Activated naive CD8-positive, alpha-beta T cell treated with anti-CD3 and anti-CD28 coated beads, Interleukin-2, amount 10 ng/mL, durations not matched to agents 7 days and 5 days (primary cell): ENCODE measurements at regions of chr1 and their contacts with region 1.

Region 1: DNA sequence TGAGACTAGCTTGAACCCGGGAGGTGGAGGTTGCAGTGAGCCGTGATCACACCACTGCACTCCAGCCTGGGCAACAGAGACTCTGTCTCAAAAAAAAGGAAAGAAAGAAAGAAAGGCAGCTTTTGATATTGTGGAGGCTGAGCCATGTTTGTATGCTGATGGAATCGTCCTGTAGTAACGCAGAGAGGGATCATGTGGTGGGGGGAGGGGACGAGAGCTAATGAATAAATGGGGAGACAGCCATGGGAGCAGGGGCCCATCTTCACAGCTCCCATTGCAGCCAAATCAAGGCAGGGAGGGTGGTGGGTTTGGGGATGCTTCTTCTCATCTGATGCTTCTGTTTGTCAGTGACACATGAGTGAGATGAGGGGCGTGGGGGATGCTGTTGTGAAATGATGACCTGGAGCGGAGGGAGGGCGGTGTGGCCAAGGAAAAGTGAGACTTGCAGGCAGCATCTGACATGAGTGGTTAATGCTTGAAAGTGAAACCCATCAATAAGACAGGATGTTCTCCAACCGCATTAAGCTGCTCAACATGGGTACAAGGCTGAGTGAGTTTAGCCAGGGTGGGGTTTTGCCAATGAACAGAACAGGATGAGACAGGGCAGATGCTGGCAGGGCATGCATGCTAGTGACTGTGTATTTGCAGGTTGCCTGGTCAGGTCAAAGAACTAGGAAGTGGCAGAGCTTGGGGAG is 16.7 kb downstream of the SPATA21 start:
- DNase-seq: peak; percentile 69
- ATAC-seq: peak; percentile 97
- H3K4me3 Mint-ChIP-seq: peak overlapping the region; percentile 68
- H3K27ac Mint-ChIP-seq: peak overlapping the region; percentile 94
- H3K4me1 Mint-ChIP-seq: peaks cover 28% of the 10 kb centered on the region
- H3K27me3 Mint-ChIP-seq: peaks cover 4% of the 10 kb centered on the region

Region 2: GRCh38 chr1:16324456-16324890 is 96.1 kb before region 1 on chr1:
- POLR2A ChIA-PET with region 1: no interaction called
- DNase-seq: no peak
- ATAC-seq: no peak
- H3K4me3 Mint-ChIP-seq: no peak overlapping the region
- H3K27ac Mint-ChIP-seq: no peak overlapping the region
- H3K4me1 Mint-ChIP-seq: peaks cover 4% of the 10 kb centered on the region
- H3K27me3 Mint-ChIP-seq: no peaks in the 10 kb centered on the region

Region 3: DNA sequence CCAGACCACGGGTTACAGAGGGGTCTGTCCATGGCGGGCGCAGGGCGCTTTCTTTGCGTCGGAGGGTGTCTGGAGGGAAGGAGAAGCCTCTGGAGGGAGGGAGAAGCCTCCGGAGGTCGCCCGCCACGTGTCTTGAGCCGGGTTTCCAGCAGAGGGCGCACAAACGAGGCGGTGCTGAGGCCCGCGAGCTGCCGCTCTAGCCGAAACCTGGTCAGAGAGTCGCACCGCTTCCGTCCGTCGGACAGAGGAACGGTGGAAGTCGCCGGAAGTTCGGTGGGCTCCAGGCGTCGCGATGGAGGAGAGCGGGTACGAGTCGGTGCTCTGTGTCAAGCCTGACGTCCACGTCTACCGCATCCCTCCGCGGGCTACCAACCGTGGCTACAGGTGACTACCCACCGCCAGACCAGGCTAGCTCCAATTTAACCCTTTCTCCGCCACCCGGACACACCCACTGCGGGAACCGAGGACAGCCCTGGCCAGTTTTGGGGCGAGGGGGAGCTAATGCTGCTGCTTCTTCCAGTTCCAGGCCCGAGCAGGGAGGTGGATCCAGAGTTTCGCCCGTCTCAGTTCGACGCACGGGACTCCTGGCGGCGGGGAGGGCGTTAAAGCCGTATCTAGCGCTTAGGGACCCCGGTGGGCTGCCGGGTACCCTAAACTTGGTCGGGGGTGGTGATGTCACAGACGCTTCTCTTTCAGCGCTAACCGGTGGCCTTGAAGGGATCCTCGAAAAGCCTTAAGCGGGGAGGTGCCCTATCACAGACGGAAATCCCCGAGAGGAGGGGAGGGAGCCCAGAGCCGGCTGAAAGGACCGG is 20.1 kb after region 1 on chr1 and contains the start of gene NECAP2:
- POLR2A ChIA-PET with region 1: interaction called, 28 read pairs
- DNase-seq: peak; percentile 96
- ATAC-seq: peak; percentile 89
- H3K4me3 Mint-ChIP-seq: peak within 1 kb of the TSS; percentile 86
- H3K27ac Mint-ChIP-seq: peak within 1 kb of the TSS; percentile 76
- H3K4me1 Mint-ChIP-seq: peaks cover 25% of the 10 kb centered on the region
- H3K27me3 Mint-ChIP-seq: no peaks in the 10 kb centered on the region
- total RNA-seq, gene NECAP2: 110 to 111 TPM

Region 4: GRCh38 chr1:16474166-16474800 is 53.7 kb after region 1 on chr1:
- POLR2A ChIA-PET with region 1: no interaction called
- DNase-seq: peak; percentile 32
- ATAC-seq: no peak
- H3K4me3 Mint-ChIP-seq: no peak overlapping the region
- H3K27ac Mint-ChIP-seq: no peak overlapping the region
- H3K4me1 Mint-ChIP-seq: no peaks in the 10 kb centered on the region
- H3K27me3 Mint-ChIP-seq: no peaks in the 10 kb centered on the region